ENCODE measurements at regions of chr6 and their contacts with region 1.

Region 1: GRCh38 chr6:119110601-119111548 is 32.4 kb upstream of the FAM184A start:
- DNase-seq: no peak
- ATAC-seq: peak; percentile 77 to 90
- H3K4me3 ChIP-seq: no peak overlapping the region
- H3K27ac ChIP-seq: no peak overlapping the region
- H3K4me1 ChIP-seq: peaks cover 11% of the 10 kb centered on the region
- H3K27me3 ChIP-seq: no peaks in the 10 kb centered on the region
- CTCF ChIP-seq: peak; percentile 58

Region 2: DNA sequence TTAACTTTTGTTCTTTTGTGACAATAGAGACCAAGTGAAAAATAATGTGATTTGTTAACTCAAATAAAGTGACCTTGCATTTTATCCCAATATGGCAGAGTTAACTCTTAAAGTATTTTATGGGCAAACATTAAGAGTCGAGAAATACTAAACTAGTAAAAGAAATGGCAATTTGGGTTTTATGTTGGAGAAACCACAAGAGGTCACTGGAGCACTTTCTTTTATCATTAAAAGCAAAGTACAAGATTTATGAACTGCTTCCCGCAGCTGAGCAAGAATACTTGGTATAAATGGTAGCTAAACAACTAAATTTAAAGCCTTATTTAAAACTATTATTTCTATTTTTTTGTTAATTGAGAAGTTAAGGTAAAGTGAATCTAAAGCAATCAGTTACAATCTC is 142.5 kb before region 1 on chr6:
- intact Hi-C with region 1: loop called (anchors 10 kb)
- DNase-seq: no peak
- ATAC-seq: no peak
- H3K4me3 ChIP-seq: no peak overlapping the region
- H3K27ac ChIP-seq: no peak overlapping the region
- H3K4me1 ChIP-seq: no peaks in the 10 kb centered on the region
- H3K27me3 ChIP-seq: no peaks in the 10 kb centered on the region
- CTCF ChIP-seq: peak; percentile 32

Region 3: GRCh38 chr6:119201480-119201879 is 90.6 kb after region 1 on chr6:
- intact Hi-C with region 1: no loop called
- DNase-seq: no peak
- ATAC-seq: no peak
- H3K4me3 ChIP-seq: no peak overlapping the region
- H3K27ac ChIP-seq: no peak overlapping the region
- H3K4me1 ChIP-seq: no peaks in the 10 kb centered on the region
- H3K27me3 ChIP-seq: no peaks in the 10 kb centered on the region
- CTCF ChIP-seq: no peak

Measured in lower lobe of right lung (tissue), 2 donors.